ENCODE measurements at regions of chr7 and their contacts with region 1.

Region 1: DNA sequence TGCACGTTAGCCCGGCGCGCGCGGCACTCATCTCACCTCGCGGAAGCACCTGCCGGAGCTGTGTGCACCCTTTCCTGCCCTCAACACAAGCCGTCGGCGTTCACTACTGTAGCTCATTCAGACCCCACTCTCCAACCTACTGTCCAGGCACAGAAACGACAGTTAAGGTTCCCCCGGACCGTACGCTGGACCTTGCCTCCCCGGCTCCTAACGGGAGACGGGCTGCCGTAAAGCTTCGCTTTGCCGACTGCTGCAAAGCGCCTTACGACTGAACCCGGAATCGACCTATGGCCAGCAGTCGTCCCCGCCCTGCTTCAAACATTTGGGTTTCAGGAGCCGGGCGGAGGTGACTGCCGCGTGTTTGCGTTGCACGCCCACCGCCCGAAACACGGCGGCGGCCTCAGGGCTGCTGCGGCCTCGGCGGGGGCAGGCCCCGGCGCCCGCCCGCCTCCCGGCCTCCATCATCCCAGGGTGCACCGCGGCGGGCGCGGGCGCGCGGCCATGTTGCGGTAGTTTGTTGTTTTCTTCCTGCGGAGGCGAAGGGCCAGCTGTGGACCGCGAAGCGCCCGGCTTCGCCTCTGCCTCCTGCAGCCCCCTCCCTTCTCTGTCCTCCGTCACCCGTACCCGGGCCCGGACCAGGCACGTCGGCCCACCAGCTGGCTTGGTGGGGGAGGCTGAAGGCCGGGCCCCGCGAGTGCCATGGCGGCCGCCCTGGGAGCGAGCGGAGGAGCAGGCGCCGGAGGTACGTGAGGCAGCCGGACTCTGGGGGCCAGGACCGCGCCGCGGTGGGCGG is at the start of gene RBM33:
- DNase-seq: peak; percentile 53 to 87 (median 69)
- ATAC-seq: peak; percentile 81
- H3K4me3 ChIP-seq: peak within 1 kb of the TSS; percentile 79
- H3K4me3 Mint-ChIP-seq: peak within 1 kb of the TSS; percentile 99
- H3K27ac ChIP-seq: peak within 1 kb of the TSS; percentile 83 to 94
- H3K27ac Mint-ChIP-seq: peak within 1 kb of the TSS; percentile 94
- H3K4me1 ChIP-seq: peaks cover 22% of the 10 kb centered on the region
- H3K4me1 Mint-ChIP-seq: peaks cover 62% of the 10 kb centered on the region
- H3K27me3 ChIP-seq: no peaks in the 10 kb centered on the region
- H3K27me3 Mint-ChIP-seq: no peaks in the 10 kb centered on the region
- CTCF ChIP-seq: no peak
- total RNA-seq, gene RBM33: 178 to 184 TPM

Region 2: DNA sequence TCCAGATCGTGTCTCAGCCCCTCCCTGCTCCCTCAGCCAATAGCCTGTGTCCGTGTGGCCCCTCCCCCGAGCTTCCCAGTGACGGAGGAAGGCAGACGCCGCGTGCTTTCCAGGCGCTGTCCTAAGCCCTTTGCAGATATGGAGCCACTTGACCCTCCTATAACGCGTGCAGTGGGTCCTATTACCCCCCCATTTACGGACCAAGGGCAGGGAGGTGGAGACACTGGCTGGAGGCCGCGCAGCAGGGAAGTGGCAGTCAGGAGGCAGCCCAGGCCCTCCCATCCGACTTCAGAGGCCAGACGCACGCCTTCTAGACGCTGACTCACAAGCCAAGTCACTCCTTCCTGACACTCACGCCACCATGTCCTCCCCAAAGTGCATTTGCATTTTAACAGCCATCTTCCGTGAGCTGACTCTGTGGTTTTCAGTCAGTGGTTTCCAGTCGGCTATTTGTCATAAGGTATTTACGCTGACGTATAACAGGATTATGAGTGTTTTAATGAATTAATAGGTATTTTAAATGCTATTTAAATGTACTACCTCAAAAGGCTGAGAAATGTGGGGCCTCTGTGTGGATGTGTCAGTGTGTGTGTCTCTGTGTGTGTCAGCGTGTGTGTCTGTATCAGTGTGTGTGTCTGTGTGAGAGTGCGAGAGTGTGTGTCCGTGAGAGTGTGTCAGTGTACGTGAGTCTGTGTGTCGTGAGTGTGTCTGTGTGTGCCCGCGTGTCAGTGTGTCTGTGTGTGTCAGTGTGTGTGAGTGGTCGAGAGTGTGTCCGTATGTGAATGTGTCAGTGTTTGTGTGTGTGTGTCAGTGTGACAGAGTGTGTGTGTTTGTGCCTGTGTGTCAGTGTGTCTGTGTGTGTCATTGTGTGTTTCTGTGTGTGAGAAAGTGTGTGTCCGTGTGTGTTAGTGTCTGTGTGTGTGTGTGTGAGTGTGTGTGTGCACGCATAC is 438.7 kb before region 1 on chr7:
- CTCF ChIA-PET with region 1: no interaction called
- POLR2A ChIA-PET with region 1: no interaction called
- intact Hi-C with region 1: loop called in 1 of 2 experiments (anchors 10 kb)
- DNase-seq: peak; percentile 67 to 98 (median 81)
- ATAC-seq: peak; percentile 91
- H3K4me3 ChIP-seq: peak overlapping the region; percentile 69
- H3K4me3 Mint-ChIP-seq: peak overlapping the region; percentile 91
- H3K27ac ChIP-seq: peak overlapping the region; percentile 67 to 93
- H3K27ac Mint-ChIP-seq: peak overlapping the region; percentile 93
- H3K4me1 ChIP-seq: peaks cover 29% of the 10 kb centered on the region
- H3K4me1 Mint-ChIP-seq: peaks cover 22% of the 10 kb centered on the region
- H3K27me3 ChIP-seq: no peaks in the 10 kb centered on the region
- H3K27me3 Mint-ChIP-seq: no peaks in the 10 kb centered on the region
- CTCF ChIP-seq: no peak

Region 3: DNA sequence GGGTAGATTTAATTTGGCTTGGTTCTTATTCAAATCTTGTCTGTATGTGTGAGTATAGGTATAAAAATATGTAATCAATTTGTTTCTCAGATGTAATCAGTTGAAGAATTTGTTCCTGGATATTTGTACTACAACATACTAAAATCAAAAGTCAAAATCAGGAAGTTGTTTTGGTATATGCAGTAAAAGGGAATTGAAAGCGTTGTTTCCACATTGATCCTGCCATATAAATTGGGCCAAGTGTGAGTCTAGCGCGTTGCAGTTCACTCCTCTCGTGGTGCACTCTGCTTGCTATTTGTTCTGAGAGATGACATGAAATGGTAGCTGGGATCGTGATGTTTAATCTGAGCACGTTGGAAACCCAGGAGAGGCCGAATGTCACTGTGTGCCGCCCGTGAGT is 111.9 kb after region 1 on chr7:
- CTCF ChIA-PET with region 1: no interaction called
- POLR2A ChIA-PET with region 1: no interaction called
- intact Hi-C with region 1: no loop called
- DNase-seq: peak in 1 of 14 experiments; percentile 31
- ATAC-seq: no peak
- H3K4me3 ChIP-seq: no peak overlapping the region
- H3K4me3 Mint-ChIP-seq: no peak overlapping the region
- H3K27ac ChIP-seq: no peak overlapping the region
- H3K27ac Mint-ChIP-seq: no peak overlapping the region
- H3K4me1 ChIP-seq: peaks cover 20% of the 10 kb centered on the region
- H3K4me1 Mint-ChIP-seq: peaks cover 81% of the 10 kb centered on the region
- H3K27me3 ChIP-seq: no peaks in the 10 kb centered on the region
- H3K27me3 Mint-ChIP-seq: no peaks in the 10 kb centered on the region
- CTCF ChIP-seq: no peak

Region 4: DNA sequence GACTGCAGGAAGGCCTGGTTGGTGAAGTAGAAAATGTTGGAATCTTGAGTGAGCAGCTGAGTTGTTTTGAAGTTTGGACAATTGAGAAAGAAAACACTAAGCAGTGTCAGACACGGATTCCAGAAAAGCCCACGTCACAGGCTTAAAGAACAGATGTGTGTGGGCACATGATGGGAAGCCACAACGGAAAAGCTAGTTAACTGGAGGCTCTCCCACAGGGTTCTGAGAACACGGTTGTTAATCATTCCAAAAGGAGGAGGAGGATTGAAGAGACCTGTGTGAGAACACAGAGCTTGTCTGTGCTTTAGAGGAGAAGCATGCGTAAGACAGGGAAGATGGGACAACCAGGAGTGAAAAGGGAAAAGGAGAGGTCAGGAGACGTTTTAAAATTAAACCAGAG is 125.3 kb after region 1 on chr7:
- CTCF ChIA-PET with region 1: no interaction called
- POLR2A ChIA-PET with region 1: interaction called, 4 read pairs
- intact Hi-C with region 1: loop called in 1 of 2 experiments (anchors 5 kb)
- DNase-seq: no peak
- ATAC-seq: no peak
- H3K4me3 ChIP-seq: no peak overlapping the region
- H3K4me3 Mint-ChIP-seq: no peak overlapping the region
- H3K27ac ChIP-seq: no peak overlapping the region
- H3K27ac Mint-ChIP-seq: no peak overlapping the region
- H3K4me1 ChIP-seq: peaks cover 4% of the 10 kb centered on the region
- H3K4me1 Mint-ChIP-seq: peaks cover 8% of the 10 kb centered on the region
- H3K27me3 ChIP-seq: no peaks in the 10 kb centered on the region
- H3K27me3 Mint-ChIP-seq: no peaks in the 10 kb centered on the region
- CTCF ChIP-seq: no peak

Region 5: GRCh38 chr7:156892821-156893706 is 1248.7 kb after region 1 on chr7 and contains the start of gene LMBR1:
- CTCF ChIA-PET with region 1: no interaction called
- POLR2A ChIA-PET with region 1: no interaction called
- intact Hi-C with region 1: loop called in 1 of 2 experiments (anchors 10 kb)
- DNase-seq: peak; percentile 91 to 98 (median 94)
- ATAC-seq: peak; percentile 80
- H3K4me3 ChIP-seq: peak within 1 kb of the TSS; percentile 77
- H3K4me3 Mint-ChIP-seq: peak within 1 kb of the TSS; percentile 96
- H3K27ac ChIP-seq: peak within 1 kb of the TSS; percentile 73 to 83
- H3K27ac Mint-ChIP-seq: peak within 1 kb of the TSS; percentile 93
- H3K4me1 ChIP-seq: peaks cover 24% of the 10 kb centered on the region
- H3K4me1 Mint-ChIP-seq: peaks cover 54% of the 10 kb centered on the region
- H3K27me3 ChIP-seq: no peaks in the 10 kb centered on the region
- H3K27me3 Mint-ChIP-seq: no peaks in the 10 kb centered on the region
- CTCF ChIP-seq: peak; percentile 72
- total RNA-seq, gene LMBR1: 61.6 to 61.9 TPM

Region 6: GRCh38 chr7:157138424-157139110 is 1494.2 kb after region 1 on chr7 and contains the start of gene UBE3C:
- CTCF ChIA-PET with region 1: no interaction called
- POLR2A ChIA-PET with region 1: interaction called, 4 read pairs
- intact Hi-C with region 1: loop called in 1 of 2 experiments (anchors 5 kb)
- DNase-seq: peak; percentile 79 to 97 (median 90)
- ATAC-seq: peak; percentile 81
- H3K4me3 ChIP-seq: peak within 1 kb of the TSS; percentile 78
- H3K4me3 Mint-ChIP-seq: peak within 1 kb of the TSS; percentile 92
- H3K27ac ChIP-seq: peak within 1 kb of the TSS; percentile 85 to 86
- H3K27ac Mint-ChIP-seq: peak within 1 kb of the TSS; percentile 98
- H3K4me1 ChIP-seq: peaks cover 44% of the 10 kb centered on the region
- H3K4me1 Mint-ChIP-seq: peaks cover 49% of the 10 kb centered on the region
- H3K27me3 ChIP-seq: no peaks in the 10 kb centered on the region
- H3K27me3 Mint-ChIP-seq: no peaks in the 10 kb centered on the region
- CTCF ChIP-seq: no peak
- total RNA-seq, gene UBE3C: 30.8 to 32.3 TPM

Measured in CD4-positive, alpha-beta T cell (primary cell).